CD8-positive, alpha-beta T cell (primary cell): ENCODE measurements at regions of chr16 and their contacts with region 1.

Region 1: GRCh38 chr16:79272141-79272577 is 328.4 kb downstream of the MAF start:
- DNase-seq: peak; percentile 9 to 86 (median 51)
- ATAC-seq: peak; percentile 76
- H3K4me3 ChIP-seq: peak overlapping the region; percentile 6 to 36
- H3K4me3 Mint-ChIP-seq: peak overlapping the region; percentile 76
- H3K27ac ChIP-seq: peak overlapping the region in 1 of 2 experiments; percentile 62
- H3K27ac Mint-ChIP-seq: peak overlapping the region; percentile 90
- H3K4me1 ChIP-seq: peaks cover 42% of the 10 kb centered on the region
- H3K4me1 Mint-ChIP-seq: peaks cover 61% of the 10 kb centered on the region
- H3K27me3 ChIP-seq: peaks cover 0 to 4% of the 10 kb centered on the region in 2 experiments
- H3K27me3 Mint-ChIP-seq: peaks cover 34% of the 10 kb centered on the region
- CTCF ChIP-seq: no peak

Region 2: GRCh38 chr16:79089735-79090284 is 182.3 kb before region 1 on chr16:
- CTCF ChIA-PET with region 1: no interaction called
- POLR2A ChIA-PET with region 1: no interaction called
- intact Hi-C with region 1: loop called in 1 of 2 experiments (anchors 5 kb)
- DNase-seq: peak in 7 of 9 experiments; percentile 17 to 82 (median 37)
- ATAC-seq: peak; percentile 60
- H3K4me3 ChIP-seq: peak overlapping the region; percentile 14 to 32
- H3K4me3 Mint-ChIP-seq: peak overlapping the region; percentile 71
- H3K27ac ChIP-seq: peak overlapping the region in 1 of 2 experiments; percentile 23
- H3K27ac Mint-ChIP-seq: peak overlapping the region; percentile 12
- H3K4me1 ChIP-seq: peaks cover 50% of the 10 kb centered on the region
- H3K4me1 Mint-ChIP-seq: peaks cover 47% of the 10 kb centered on the region
- H3K27me3 ChIP-seq: no peaks in the 10 kb centered on the region
- H3K27me3 Mint-ChIP-seq: no peaks in the 10 kb centered on the region
- CTCF ChIP-seq: no peak

Region 3: GRCh38 chr16:79286646-79287423 is 14.7 kb after region 1 on chr16:
- CTCF ChIA-PET with region 1: interaction called, 3 read pairs
- POLR2A ChIA-PET with region 1: no interaction called
- intact Hi-C with region 1: loop called in 1 of 2 experiments (anchors 1 kb)
- DNase-seq: peak in 5 of 9 experiments; percentile 13 to 49 (median 27)
- ATAC-seq: peak; percentile 45
- H3K4me3 ChIP-seq: peak overlapping the region; percentile 21 to 28
- H3K4me3 Mint-ChIP-seq: peak overlapping the region; percentile 54
- H3K27ac ChIP-seq: no peak overlapping the region
- H3K27ac Mint-ChIP-seq: peak overlapping the region; percentile 63
- H3K4me1 ChIP-seq: peaks cover 17% of the 10 kb centered on the region
- H3K4me1 Mint-ChIP-seq: peaks cover 43% of the 10 kb centered on the region
- H3K27me3 ChIP-seq: no peaks in the 10 kb centered on the region
- H3K27me3 Mint-ChIP-seq: peaks cover 21% of the 10 kb centered on the region
- CTCF ChIP-seq: no peak

Region 4: DNA sequence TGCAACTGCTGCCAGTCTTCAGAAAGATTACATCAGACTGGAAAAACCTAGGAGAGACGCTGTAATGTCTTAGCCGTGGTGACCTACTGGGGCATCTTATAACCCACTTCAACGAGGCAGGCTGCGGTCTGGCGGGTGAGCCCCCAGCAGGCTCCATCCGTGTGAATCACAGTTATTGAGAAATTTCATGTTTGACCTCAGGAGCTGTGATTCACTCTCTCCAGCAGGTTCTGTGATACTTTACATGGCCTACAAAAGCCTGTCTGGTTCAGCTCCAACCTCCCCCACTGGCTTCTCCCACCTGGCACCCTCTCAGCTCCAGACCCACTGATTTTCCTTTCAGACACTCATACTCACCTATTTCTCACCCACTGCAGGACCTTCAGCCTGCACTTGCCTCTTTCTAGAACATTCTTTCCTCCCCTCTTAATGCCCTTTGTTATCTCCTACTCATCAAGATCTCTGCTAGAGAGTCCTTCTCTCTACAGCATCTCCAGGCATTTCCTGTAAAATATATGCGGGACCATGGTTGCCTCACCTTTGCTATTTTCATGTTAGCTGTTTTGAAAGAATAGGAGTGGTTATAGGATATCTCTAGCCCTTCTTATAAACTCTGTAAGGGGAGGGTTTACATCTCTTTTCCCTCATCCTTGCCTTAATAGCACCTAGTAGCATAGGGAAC is 100.5 kb after region 1 on chr16:
- CTCF ChIA-PET with region 1: no interaction called
- POLR2A ChIA-PET with region 1: no interaction called
- intact Hi-C with region 1: loop called in 1 of 2 experiments (anchors 5 kb)
- DNase-seq: peak in 6 of 9 experiments; percentile 9 to 70 (median 39)
- ATAC-seq: peak; percentile 61
- H3K4me3 ChIP-seq: no peak overlapping the region
- H3K4me3 Mint-ChIP-seq: no peak overlapping the region
- H3K27ac ChIP-seq: no peak overlapping the region
- H3K27ac Mint-ChIP-seq: peak overlapping the region; percentile 43
- H3K4me1 ChIP-seq: no peaks in the 10 kb centered on the region
- H3K4me1 Mint-ChIP-seq: peaks cover 8% of the 10 kb centered on the region
- H3K27me3 ChIP-seq: no peaks in the 10 kb centered on the region
- H3K27me3 Mint-ChIP-seq: peaks cover 2% of the 10 kb centered on the region
- CTCF ChIP-seq: no peak

Region 5: GRCh38 chr16:79845033-79845733 is 573.0 kb after region 1 on chr16:
- CTCF ChIA-PET with region 1: no interaction called
- POLR2A ChIA-PET with region 1: no interaction called
- intact Hi-C with region 1: no loop called
- DNase-seq: no peak
- ATAC-seq: no peak
- H3K4me3 ChIP-seq: no peak overlapping the region
- H3K4me3 Mint-ChIP-seq: no peak overlapping the region
- H3K27ac ChIP-seq: no peak overlapping the region
- H3K27ac Mint-ChIP-seq: no peak overlapping the region
- H3K4me1 ChIP-seq: no peaks in the 10 kb centered on the region
- H3K4me1 Mint-ChIP-seq: peaks cover 4% of the 10 kb centered on the region
- H3K27me3 ChIP-seq: no peaks in the 10 kb centered on the region
- H3K27me3 Mint-ChIP-seq: no peaks in the 10 kb centered on the region
- CTCF ChIP-seq: no peak